ENCODE measurements at regions of chr10 and their contacts with region 1.

Region 1: DNA sequence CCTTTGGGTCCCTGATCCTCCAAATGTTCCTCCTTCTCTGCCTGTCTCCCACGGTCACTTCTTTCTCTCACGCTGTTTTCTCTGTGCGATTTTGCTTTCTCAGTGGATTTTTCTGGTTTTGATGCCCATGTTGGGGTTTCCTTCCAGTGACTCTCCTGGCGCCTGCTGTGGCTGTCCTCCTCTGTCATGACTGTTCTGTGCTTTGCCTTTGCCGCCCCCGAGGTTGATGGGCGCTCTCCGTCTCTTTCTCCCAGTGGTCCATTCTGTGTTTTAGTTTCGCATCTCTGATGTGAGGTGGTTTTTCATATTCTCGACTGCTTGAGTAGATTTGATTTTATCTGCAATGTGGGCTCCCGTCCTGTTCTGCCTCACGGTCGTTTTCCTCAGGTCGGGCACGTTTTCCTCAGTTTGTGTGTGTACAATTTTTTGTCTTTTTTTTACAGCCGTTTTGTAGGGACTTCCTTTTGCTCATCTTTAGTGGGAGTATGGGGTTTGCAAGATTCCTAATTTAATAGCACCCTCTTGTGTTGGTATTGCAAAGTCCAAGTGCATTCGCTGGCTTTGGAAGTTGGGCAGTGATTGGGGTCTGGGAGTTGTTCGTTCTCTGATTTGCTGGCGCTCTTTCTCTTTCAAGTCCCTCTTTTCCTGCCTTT is 100.0 kb downstream of the INPP5A start:
- DNase-seq: no peak
- ATAC-seq: peak; percentile 57 to 75
- H3K4me3 ChIP-seq: no peak overlapping the region
- H3K27ac ChIP-seq: no peak overlapping the region
- H3K4me1 ChIP-seq: peaks cover 26% of the 10 kb centered on the region
- H3K27me3 ChIP-seq: no peaks in the 10 kb centered on the region
- CTCF ChIP-seq: peak; percentile 71

Region 2: GRCh38 chr10:132463333-132464252 is 174.0 kb before region 1 on chr10:
- intact Hi-C with region 1: loop called (anchors 5 kb)
- DNase-seq: no peak
- ATAC-seq: no peak
- H3K4me3 ChIP-seq: no peak overlapping the region
- H3K27ac ChIP-seq: peak overlapping the region; percentile 80
- H3K4me1 ChIP-seq: peaks cover 29% of the 10 kb centered on the region
- H3K27me3 ChIP-seq: no peaks in the 10 kb centered on the region
- CTCF ChIP-seq: peak; percentile 16

Measured in lower lobe of right lung (tissue), 2 donors.